Calu3 (cell line): ENCODE measurements at regions of chr1 and their contacts with region 1.

Region 1: GRCh38 chr1:45521398-45522323 is at the start of gene PRDX1:
- DNase-seq: peak; percentile 97
- H3K4me3 Mint-ChIP-seq: peak within 1 kb of the TSS; percentile 84
- H3K27ac Mint-ChIP-seq: peak within 1 kb of the TSS; percentile 99
- H3K4me1 Mint-ChIP-seq: peaks cover 56% of the 10 kb centered on the region
- H3K27me3 Mint-ChIP-seq: no peaks in the 10 kb centered on the region
- CTCF ChIP-seq: no peak
- total RNA-seq, gene PRDX1: 686 and 744 TPM in 2 replicates

Region 2: GRCh38 chr1:45297604-45298356 is 223.9 kb before region 1 on chr1:
- CTCF ChIA-PET with region 1: no interaction called
- intact Hi-C with region 1: no loop called
- DNase-seq: no peak
- H3K4me3 Mint-ChIP-seq: no peak overlapping the region
- H3K27ac Mint-ChIP-seq: no peak overlapping the region
- H3K4me1 Mint-ChIP-seq: no peaks in the 10 kb centered on the region
- H3K27me3 Mint-ChIP-seq: no peaks in the 10 kb centered on the region
- CTCF ChIP-seq: no peak

Region 3: GRCh38 chr1:45545019-45545493 is 23.4 kb after region 1 on chr1:
- CTCF ChIA-PET with region 1: interaction called, 10 read pairs
- intact Hi-C with region 1: loop called (anchors 1 kb)
- DNase-seq: no peak
- H3K4me3 Mint-ChIP-seq: no peak overlapping the region
- H3K27ac Mint-ChIP-seq: peak overlapping the region; percentile 4
- H3K4me1 Mint-ChIP-seq: peaks cover 32% of the 10 kb centered on the region
- H3K27me3 Mint-ChIP-seq: no peaks in the 10 kb centered on the region
- CTCF ChIP-seq: no peak

Region 4: GRCh38 chr1:45550401-45551351 is 29.0 kb after region 1 on chr1 and contains the start of gene AKR1A1:
- CTCF ChIA-PET with region 1: interaction called, 10 read pairs
- intact Hi-C with region 1: loop called (anchors 1 kb)
- DNase-seq: peak; percentile 93
- H3K4me3 Mint-ChIP-seq: peak within 1 kb of the TSS; percentile 77
- H3K27ac Mint-ChIP-seq: peak within 1 kb of the TSS; percentile 87
- H3K4me1 Mint-ChIP-seq: peaks cover 18% of the 10 kb centered on the region
- H3K27me3 Mint-ChIP-seq: no peaks in the 10 kb centered on the region
- CTCF ChIP-seq: no peak
- total RNA-seq, gene AKR1A1: 111 and 119 TPM in 2 replicates